ENCODE measurements at regions of chr17 and their contacts with region 1.

Region 1: DNA sequence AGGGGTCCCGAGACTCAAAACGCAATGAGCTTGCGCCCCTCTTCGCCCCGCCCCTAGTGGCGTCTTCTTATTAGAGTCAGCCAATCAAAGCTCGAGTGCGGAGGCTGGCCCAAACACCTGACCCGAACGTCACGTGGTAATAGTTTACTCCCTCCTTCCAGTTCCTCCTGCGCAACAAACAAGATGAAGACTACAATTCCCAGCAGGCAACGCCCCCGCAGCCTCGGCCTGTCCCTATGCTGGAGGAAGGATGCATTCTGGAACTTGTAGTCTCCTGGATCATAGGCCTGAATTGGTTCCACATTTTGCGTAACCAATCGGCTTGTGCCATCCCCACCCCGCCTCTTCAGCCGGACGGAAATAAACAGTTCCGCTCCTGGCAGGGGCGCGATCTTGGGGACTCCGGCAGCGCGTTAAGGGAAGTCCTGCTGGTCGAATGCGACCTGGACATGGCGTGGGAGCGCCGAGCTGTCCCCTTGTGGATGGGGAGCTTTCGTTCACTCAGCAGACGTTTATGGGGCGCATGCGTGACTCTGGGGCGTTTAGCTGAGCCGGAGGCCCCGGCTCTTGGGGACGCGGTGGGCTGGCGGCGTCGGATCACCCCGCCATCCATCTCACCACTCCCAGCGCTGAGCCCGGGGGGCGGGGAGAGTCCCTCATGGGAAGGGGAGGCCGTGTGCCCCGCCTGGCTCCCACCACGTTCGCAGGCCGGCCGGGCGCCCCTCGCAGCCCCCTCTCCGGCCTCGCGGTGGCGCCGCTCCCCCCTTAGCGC is at the start of gene WBP2:
- DNase-seq: peak; percentile 99
- H3K4me3 Mint-ChIP-seq: no peak within 1 kb of the TSS
- H3K27ac Mint-ChIP-seq: peak within 1 kb of the TSS; percentile 86
- H3K4me1 Mint-ChIP-seq: peaks cover 35% of the 10 kb centered on the region
- H3K27me3 Mint-ChIP-seq: no peaks in the 10 kb centered on the region
- total RNA-seq, gene WBP2: 79.1 to 80.6 TPM

Region 2: GRCh38 chr17:75764711-75765421 is 90.6 kb before region 1 on chr17 and contains the start of gene GALK1:
- CTCF ChIA-PET with region 1: interaction called, 13 read pairs
- POLR2A ChIA-PET with region 1: interaction called, 4 read pairs
- intact Hi-C with region 1: no loop called
- DNase-seq: peak; percentile 83
- H3K4me3 Mint-ChIP-seq: peak within 1 kb of the TSS; percentile 79
- H3K27ac Mint-ChIP-seq: peak within 1 kb of the TSS; percentile 71
- H3K4me1 Mint-ChIP-seq: peaks cover 11% of the 10 kb centered on the region
- H3K27me3 Mint-ChIP-seq: no peaks in the 10 kb centered on the region
- total RNA-seq, gene GALK1: 69.3 to 69.7 TPM

Region 3: GRCh38 chr17:75845049-75845860 is 10.2 kb before region 1 on chr17:
- CTCF ChIA-PET with region 1: interaction called, 45 read pairs
- POLR2A ChIA-PET with region 1: interaction called, 26 read pairs
- intact Hi-C with region 1: loop called (anchors 1 kb)
- DNase-seq: peak; percentile 83
- H3K4me3 Mint-ChIP-seq: peak overlapping the region; percentile 57
- H3K27ac Mint-ChIP-seq: peak overlapping the region; percentile 95
- H3K4me1 Mint-ChIP-seq: peaks cover 21% of the 10 kb centered on the region
- H3K27me3 Mint-ChIP-seq: no peaks in the 10 kb centered on the region

Region 4: GRCh38 chr17:75877752-75878173 is 22.3 kb after region 1 on chr17:
- CTCF ChIA-PET with region 1: interaction called, 111 read pairs
- POLR2A ChIA-PET with region 1: interaction called, 17 read pairs
- intact Hi-C with region 1: loop called (anchors 2 kb)
- DNase-seq: peak; percentile 81
- H3K4me3 Mint-ChIP-seq: peak overlapping the region; percentile 89
- H3K27ac Mint-ChIP-seq: peak overlapping the region; percentile 92
- H3K4me1 Mint-ChIP-seq: peaks cover 33% of the 10 kb centered on the region
- H3K27me3 Mint-ChIP-seq: no peaks in the 10 kb centered on the region

Region 5: DNA sequence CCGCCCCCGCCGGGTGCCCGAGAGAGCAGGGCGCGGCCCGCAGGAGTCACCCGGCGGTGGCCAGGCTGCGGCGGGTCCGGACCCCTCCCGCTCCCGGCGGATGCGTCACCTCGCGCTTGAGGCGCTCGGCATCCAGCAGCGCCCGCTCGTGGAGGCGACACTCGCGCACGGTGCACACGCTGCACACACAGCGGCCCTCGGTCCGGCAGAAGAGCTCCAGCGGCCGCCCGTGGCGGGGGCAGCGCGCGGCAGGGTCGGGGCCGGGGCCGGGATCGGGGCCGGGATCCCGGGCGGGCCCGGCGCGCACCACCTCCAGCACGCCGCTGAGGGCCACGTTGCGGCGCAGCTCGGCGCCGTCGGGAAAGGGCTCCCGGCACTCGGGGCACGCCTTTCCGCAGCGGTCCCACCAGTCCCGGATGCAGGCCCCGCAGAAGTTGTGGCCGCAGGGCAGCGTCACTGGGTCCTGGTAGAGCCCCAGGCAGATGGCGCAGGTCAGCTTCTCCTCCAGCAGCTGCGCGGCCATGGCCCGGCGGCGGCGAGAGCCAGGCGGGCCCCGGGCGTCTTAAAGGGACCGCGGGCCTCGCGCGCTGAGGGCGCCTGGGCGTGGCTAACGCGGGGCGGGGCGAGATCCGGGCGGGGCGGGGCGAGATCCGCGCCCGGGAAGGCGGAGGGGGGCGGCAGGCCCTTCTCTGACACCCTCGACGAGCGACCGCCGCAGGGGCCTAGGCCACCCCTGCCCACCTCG is 41.1 kb after region 1 on chr17 and contains the start of gene TRIM65:
- CTCF ChIA-PET with region 1: interaction called, 13 read pairs
- POLR2A ChIA-PET with region 1: interaction called, 5 read pairs
- intact Hi-C with region 1: loop called (anchors 2 kb)
- DNase-seq: peak; percentile 87
- H3K4me3 Mint-ChIP-seq: peak within 1 kb of the TSS; percentile 84
- H3K27ac Mint-ChIP-seq: peak within 1 kb of the TSS; percentile 72
- H3K4me1 Mint-ChIP-seq: peaks cover 24% of the 10 kb centered on the region
- H3K27me3 Mint-ChIP-seq: no peaks in the 10 kb centered on the region
- total RNA-seq, gene TRIM65: 27.5 to 28.2 TPM

Region 6: DNA sequence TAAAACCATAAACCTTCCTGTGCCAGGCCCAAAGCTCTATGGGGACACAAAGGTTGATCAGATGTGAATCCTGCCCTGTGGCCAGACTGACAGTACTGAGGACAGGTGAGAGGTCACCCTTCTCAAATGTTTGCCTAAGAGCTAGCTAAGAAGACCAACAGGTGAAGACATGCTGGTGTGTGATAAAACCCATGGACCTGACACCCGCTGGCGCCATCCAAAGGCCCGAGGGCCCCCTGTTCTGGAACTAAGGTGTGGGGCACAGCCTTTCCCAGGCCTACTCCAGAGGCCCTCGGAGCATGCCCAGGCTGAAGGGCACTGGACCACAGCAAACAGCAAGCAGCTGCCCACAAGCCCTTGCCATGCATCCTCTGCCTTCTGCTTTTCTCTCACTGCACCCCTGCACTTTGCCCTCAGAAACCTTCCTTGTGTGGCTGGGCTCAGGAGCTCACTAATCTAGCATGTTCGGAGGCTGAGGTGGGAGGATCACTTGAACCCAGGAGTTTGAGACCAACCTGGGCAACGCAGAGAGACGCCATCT is 140.0 kb after region 1 on chr17:
- CTCF ChIA-PET with region 1: no interaction called
- POLR2A ChIA-PET with region 1: no interaction called
- intact Hi-C with region 1: no loop called
- DNase-seq: no peak
- H3K4me3 Mint-ChIP-seq: no peak overlapping the region
- H3K27ac Mint-ChIP-seq: no peak overlapping the region
- H3K4me1 Mint-ChIP-seq: peaks cover 16% of the 10 kb centered on the region
- H3K27me3 Mint-ChIP-seq: no peaks in the 10 kb centered on the region

Measured in activated CD4-positive, alpha-beta memory T cell treated with anti-CD3 and anti-CD28 coated beads for 36 hours (primary cell).